Caco-2 (cell line): ENCODE measurements at regions of chr5 and their contacts with region 1.

Region 1: DNA sequence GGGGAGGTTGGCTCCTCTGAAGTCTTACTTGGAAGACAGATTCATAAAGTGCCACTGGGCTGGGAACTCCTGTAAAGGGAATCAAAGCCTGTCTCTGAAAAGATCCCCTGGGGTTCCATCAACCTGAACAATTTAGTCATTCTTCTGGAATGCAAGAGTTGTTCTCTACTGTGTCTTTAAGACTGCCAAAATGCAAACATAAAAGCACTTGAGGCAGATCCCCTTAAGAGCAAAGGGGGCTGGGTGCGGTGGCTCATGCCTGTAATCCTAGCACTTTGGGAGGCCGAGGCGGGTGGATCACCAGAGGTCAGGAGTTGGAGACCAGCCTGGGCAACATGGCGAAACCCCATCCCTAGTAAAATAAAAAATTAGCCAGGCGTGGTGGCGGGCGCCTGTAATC is 16.7 kb downstream of the CDKN2AIPNL start:
- DNase-seq: no peak
- H3K4me3 ChIP-seq: no peak overlapping the region
- H3K4me3 Mint-ChIP-seq: no peak overlapping the region
- H3K27ac Mint-ChIP-seq: no peak overlapping the region
- H3K4me1 ChIP-seq: peaks cover 12% of the 10 kb centered on the region
- H3K4me1 Mint-ChIP-seq: peaks cover 11% of the 10 kb centered on the region
- H3K27me3 ChIP-seq: no peaks in the 10 kb centered on the region
- H3K27me3 Mint-ChIP-seq: no peaks in the 10 kb centered on the region
- CTCF ChIP-seq: no peak

Region 2: DNA sequence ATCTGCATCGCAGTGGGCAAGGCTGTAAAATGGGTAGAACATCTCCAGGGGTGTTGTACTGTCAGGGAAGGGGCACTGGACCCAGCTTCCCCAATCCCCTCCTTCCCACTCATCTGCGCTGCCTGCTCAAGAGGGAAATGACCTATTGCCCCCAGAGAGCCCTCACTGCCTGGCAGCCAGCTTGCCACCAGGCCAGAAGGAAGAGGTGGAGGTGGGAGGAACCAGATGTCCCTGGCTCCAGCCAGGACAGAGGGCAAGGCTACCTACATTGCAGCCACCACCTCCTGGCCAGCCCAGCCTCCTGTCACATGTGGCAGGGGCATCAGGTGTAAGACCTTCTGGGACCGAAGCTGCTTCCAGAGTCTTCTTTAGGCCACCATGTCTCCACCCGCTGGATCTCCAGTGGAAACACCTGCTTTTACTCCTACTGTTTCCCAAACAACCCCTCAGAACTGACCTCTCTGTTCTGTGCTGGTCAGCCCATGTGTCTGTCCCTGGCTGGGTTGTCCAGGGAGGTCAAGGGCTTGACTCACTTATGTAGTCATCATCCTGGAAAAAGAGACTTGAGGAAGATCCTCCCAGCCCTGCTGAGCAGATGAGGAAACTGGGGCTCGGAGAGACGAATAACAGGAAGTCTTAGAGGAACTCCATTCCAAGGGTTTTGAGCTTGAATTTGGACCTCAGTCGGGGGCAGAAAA is 172.9 kb after region 1 on chr5:
- CTCF ChIA-PET with region 1: no interaction called
- POLR2A ChIA-PET with region 1: no interaction called
- intact Hi-C with region 1: no loop called
- DNase-seq: no peak
- H3K4me3 ChIP-seq: no peak overlapping the region
- H3K4me3 Mint-ChIP-seq: no peak overlapping the region
- H3K27ac Mint-ChIP-seq: no peak overlapping the region
- H3K4me1 ChIP-seq: no peaks in the 10 kb centered on the region
- H3K4me1 Mint-ChIP-seq: no peaks in the 10 kb centered on the region
- H3K27me3 ChIP-seq: no peaks in the 10 kb centered on the region
- H3K27me3 Mint-ChIP-seq: no peaks in the 10 kb centered on the region
- CTCF ChIP-seq: no peak

Region 3: GRCh38 chr5:134577796-134578363 is 182.9 kb after region 1 on chr5:
- CTCF ChIA-PET with region 1: no interaction called
- POLR2A ChIA-PET with region 1: no interaction called
- intact Hi-C with region 1: loop called (anchors 5 kb)
- DNase-seq: peak; percentile 74 to 79
- H3K4me3 ChIP-seq: no peak overlapping the region
- H3K4me3 Mint-ChIP-seq: no peak overlapping the region
- H3K27ac Mint-ChIP-seq: no peak overlapping the region
- H3K4me1 ChIP-seq: no peaks in the 10 kb centered on the region
- H3K4me1 Mint-ChIP-seq: no peaks in the 10 kb centered on the region
- H3K27me3 ChIP-seq: no peaks in the 10 kb centered on the region
- H3K27me3 Mint-ChIP-seq: no peaks in the 10 kb centered on the region
- CTCF ChIP-seq: peak; percentile 77 to 81